Activated CD4-positive, alpha-beta memory T cell treated with anti-CD3 and anti-CD28 coated beads for 36 hours (primary cell): ENCODE measurements at regions of chr4 and their contacts with region 1.

Region 1: DNA sequence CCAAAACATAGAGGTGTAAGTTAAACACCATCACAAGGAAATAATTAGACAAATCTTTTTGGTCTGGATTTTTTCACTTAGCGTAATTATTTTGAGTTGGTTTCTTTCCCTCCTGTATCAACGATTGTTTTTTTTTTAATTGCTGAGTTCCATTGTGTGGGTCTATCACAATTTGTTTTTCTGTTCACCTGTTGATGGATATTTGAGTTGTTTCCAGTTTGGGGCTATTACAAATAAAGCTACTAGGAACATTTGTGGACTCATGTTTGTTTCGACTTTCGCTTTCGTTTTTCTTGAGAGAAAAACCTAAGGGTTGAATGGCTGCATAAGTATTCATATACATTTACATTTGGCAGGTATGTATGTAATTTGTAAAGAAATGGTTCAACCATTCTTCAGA is 20.4 kb upstream of the FBXW7 start:
- DNase-seq: no peak
- H3K4me3 Mint-ChIP-seq: peak overlapping the region; percentile 57
- H3K27ac Mint-ChIP-seq: peak overlapping the region; percentile 77
- H3K4me1 Mint-ChIP-seq: peaks cover 54% of the 10 kb centered on the region
- H3K27me3 Mint-ChIP-seq: no peaks in the 10 kb centered on the region

Region 2: GRCh38 chr4:152585023-152585441 is 28.7 kb after region 1 on chr4:
- CTCF ChIA-PET with region 1: no interaction called
- POLR2A ChIA-PET with region 1: no interaction called
- intact Hi-C with region 1: loop called (anchors 1 kb)
- DNase-seq: peak; percentile 17
- H3K4me3 Mint-ChIP-seq: peak overlapping the region; percentile 69
- H3K27ac Mint-ChIP-seq: peak overlapping the region; percentile 86
- H3K4me1 Mint-ChIP-seq: peaks cover 23% of the 10 kb centered on the region
- H3K27me3 Mint-ChIP-seq: no peaks in the 10 kb centered on the region

Region 3: DNA sequence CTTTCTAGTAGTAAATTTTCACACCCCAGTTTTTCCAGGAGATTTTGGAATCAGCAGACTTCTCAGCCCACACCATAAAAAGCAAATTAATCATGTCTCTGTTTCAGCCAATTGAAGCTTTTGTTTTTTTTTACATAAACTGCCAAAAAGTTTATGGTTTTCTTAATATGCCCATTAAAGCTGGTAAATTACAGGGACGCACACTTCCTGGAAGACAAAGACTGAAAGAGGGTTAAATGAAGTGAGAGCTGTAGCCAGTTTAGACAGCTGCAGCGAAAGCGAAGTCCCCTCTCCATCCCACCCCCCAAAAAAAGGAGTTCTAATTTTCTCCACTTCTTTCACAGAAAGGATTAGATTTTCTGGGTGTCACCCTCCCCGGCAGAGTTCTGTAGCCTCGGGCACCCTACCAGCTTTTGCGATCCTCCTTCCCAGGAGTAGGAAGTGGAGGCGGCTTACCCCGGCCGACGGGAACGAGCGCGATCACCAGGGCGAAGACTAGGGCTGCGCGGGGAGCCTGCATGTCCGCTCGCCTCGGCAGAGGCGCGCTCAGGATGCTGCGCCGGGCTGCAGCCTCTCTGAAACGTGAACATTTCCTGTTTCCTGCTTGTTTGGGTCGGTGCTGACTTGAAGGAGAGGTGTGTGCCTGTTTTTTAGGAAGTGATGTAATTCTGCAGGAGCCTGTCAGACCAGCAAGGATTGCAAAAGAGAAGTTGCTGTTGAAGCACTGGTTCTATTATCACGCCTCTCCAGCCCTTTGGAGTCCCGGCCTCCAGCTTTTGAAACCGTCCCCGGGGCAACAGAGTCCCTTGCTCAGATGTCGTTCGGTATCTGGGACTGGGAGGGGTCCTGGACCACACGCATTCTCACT is 123.4 kb after region 1 on chr4 and contains the start of gene TMEM154:
- CTCF ChIA-PET with region 1: interaction called, 5 read pairs
- POLR2A ChIA-PET with region 1: no interaction called
- intact Hi-C with region 1: loop called (anchors 1 kb)
- DNase-seq: peak; percentile 82
- H3K4me3 Mint-ChIP-seq: peak within 1 kb of the TSS; percentile 91
- H3K27ac Mint-ChIP-seq: peak within 1 kb of the TSS; percentile 84
- H3K4me1 Mint-ChIP-seq: peaks cover 58% of the 10 kb centered on the region
- H3K27me3 Mint-ChIP-seq: no peaks in the 10 kb centered on the region
- total RNA-seq, gene TMEM154: 18.1 to 20.8 TPM

Region 4: DNA sequence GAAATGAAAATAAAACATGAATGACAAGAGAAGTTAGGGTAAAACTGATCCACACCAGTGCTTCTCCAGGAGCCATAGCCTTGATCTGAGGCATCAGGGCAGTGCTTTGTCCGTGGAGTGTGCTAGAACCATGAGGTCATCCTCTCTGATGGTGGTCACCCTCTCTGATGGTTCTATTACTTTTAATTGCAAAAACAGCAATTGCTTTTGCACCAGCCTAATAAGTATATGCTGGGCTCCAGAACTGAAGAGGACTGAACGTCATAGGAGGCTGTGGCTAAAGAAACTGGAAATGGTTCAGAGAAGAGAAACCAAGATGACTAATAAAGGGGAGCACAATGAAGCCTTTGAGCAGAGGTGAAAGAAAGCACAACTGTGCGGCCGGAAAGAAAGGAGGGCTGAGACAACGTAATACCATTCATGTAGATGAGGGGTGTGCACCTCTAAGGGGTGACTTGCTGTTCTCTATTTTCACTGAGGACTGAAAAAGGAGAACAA is 140.5 kb after region 1 on chr4:
- CTCF ChIA-PET with region 1: no interaction called
- POLR2A ChIA-PET with region 1: no interaction called
- intact Hi-C with region 1: loop called (anchors 5 kb)
- DNase-seq: peak; percentile 84
- H3K4me3 Mint-ChIP-seq: no peak overlapping the region
- H3K27ac Mint-ChIP-seq: peak overlapping the region; percentile 51
- H3K4me1 Mint-ChIP-seq: peaks cover 19% of the 10 kb centered on the region
- H3K27me3 Mint-ChIP-seq: peaks cover 3% of the 10 kb centered on the region